ENCODE measurements at regions of chr6 and their contacts with region 1.

Region 1: GRCh38 chr6:35342258-35343091 is at the start of gene PPARD:
- DNase-seq: peak; percentile 87 to 99
- H3K4me3 ChIP-seq: peak within 1 kb of the TSS; percentile 61
- H3K4me1 ChIP-seq: peaks cover 5% of the 10 kb centered on the region
- H3K27me3 ChIP-seq: no peaks in the 10 kb centered on the region; the same call in 1 of the 2 replicates

Region 2: DNA sequence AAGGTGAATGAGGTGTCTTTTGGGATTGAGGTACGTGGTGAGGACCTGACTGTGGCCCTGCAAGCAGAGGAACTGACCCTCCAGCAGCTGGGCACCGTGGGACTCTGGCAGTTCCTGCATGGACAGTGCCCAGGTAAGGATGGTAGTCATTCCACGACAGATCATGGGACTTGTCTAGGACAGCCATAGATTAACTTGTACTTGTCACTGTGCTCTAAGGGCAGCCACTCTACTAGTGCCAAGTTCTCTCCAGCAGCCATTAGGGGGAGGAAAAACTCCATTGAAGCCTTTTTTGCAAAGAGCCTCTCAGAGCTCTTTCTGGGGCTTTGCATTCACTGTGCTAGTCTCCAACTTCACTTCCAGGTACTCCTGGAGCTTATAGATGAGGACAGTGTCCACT is 475.0 kb before region 1 on chr6:
- in situ Hi-C with region 1: no loop called
- DNase-seq: no peak
- H3K4me3 ChIP-seq: no peak overlapping the region
- H3K4me1 ChIP-seq: no peaks in the 10 kb centered on the region
- H3K27me3 ChIP-seq: no peaks in the 10 kb centered on the region

Region 3: GRCh38 chr6:35452186-35453090 is 110.0 kb after region 1 on chr6 and contains the start of gene FANCE:
- in situ Hi-C with region 1: loop called (anchors 5 kb)
- DNase-seq: peak; percentile 80 to 97
- H3K4me3 ChIP-seq: peak within 1 kb of the TSS; percentile 64
- H3K4me1 ChIP-seq: peaks cover 14% of the 10 kb centered on the region
- H3K27me3 ChIP-seq: no peaks in the 10 kb centered on the region

Measured in HAP-1 (cell line).